Cardiac septum (tissue), 1 donor: ENCODE measurements at regions of chr3 and their contacts with region 1.

Region 1: DNA sequence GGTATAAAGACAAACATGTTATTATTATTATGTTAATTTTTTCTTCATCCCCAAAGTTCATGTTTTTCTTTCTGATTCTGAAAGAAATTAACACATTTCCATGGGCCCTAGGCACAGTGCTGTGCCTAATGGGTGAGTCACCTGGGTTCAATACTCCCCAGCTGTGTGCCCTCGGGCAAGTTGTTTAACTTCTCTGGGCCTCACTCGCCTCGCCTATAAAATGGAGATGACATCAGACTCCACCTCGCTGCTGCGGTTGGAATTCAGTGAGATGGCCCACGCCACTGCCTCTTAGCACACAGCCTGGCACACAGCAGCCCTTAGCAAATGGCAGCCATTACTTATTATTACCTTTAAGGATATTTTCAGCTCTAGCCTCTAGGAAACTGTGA is 22.6 kb downstream of the DNASE1L3 start:
- DNase-seq: no peak

Region 2: GRCh38 chr3:57060089-57060829 is 1127.9 kb before region 1 on chr3 and contains the start of gene SPATA12:
- intact Hi-C with region 1: no loop called
- DNase-seq: peak; percentile 84
- total RNA-seq, gene SPATA12: not detected

Region 3: DNA sequence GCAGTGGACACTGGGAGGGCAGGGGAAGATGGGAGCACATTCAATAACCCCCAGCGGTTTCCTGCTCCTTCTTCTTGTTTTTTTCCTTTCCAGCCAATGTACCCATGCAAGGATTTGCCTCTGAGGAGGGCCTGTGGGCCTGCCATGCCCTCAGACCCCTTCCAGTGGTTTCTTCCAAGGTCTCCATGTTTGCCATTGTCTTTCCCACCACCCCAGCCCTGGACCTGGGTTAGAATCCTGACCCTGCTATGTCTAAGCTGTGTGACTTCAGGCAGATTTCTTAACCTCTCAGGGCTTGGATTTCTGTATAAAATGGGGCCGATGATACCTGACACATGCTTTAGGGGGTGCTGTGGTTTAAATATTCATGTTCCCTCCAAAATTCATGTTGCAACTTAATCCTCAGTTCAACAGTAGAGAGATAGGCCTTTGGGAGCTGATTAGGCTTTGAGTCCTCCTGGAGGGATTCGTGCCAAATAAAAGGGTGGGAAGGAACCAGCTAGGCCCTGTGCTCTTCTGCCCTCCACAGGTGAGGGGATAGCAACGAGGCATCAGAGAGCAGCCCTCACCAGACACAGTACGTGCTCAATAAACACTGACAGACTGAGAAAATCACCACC is 226.2 kb before region 1 on chr3:
- intact Hi-C with region 1: no loop called
- DNase-seq: no peak

Region 4: DNA sequence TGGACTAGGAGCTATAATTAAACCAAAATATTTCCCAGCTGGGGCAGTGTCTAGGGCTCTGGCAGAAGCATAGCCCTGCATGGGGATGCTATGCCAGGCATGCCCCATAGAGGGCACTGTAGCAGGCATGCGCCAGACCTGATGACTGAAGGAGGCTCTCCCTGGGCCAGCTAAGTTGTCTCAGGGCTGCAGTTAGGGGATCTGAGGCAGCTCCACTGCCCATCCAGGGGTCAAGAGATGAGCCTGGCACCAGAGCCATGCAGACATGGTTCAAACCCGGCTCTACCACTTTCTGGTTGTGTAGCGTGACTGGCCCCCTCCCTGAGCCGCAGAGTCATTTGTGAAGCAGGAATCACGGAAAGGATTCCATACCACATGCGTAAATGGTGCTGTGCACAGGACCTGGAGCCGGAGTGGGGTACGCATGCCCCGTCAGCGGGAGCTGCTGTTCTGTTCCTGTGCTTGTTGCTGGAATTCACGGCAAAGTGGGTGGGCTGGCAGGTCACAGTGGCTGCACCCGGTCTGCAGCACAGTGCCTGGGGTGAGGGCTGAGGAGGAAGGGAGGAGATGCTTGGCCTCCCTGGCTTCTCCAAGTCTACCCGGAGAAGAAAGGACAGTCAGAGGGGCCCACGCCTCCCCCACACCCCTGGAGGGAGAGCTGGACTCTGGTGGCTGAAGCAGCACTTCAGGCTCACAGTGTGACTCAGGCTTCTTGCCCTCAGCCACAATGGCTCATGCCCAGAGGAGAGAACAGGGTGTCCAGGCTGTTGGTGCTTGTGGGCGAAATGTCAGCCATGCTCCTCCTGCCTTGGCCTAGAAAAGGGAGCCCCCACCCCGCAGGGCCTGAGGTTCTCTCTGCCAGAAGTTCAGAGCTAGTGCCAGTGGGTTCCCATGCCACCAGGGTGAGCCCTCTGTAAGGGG is 20.5 kb before region 1 on chr3:
- intact Hi-C with region 1: no loop called
- DNase-seq: no peak

Region 5: DNA sequence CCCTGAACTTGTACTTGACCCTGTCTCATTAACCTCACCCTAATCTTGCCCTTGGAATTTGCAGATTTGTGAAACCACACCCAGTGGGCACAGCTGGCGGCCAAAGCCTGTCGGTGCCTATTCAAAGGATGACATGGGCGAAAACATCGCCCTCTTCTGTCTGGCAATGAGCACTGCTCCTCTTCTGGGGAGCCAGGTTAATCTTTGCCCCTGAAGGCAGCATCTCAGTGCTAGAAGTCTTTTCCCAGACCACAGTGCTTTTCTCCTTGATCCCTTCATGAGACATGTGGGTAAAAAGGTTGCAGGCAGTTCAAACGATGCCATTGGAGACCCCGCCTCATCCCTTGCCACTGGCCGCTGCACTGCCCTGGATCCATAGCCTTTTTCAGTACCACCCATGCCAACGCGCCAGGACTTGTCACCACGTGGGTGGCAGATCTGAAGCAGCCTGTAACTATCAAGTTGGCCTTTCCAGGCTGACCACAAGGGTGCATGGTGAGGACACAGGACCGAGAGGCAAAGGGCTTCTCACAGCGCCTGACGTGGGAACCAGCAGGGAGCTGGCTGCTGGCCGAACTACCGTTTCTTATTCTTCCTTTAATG is 29.1 kb after region 1 on chr3:
- intact Hi-C with region 1: loop called (anchors 2 kb)
- DNase-seq: no peak

Region 6: GRCh38 chr3:58299839-58300516 is 111.8 kb after region 1 on chr3:
- intact Hi-C with region 1: loop called (anchors 2 kb)
- DNase-seq: no peak